ENCODE measurements at regions of chr16 and their contacts with region 1.

Region 1: GRCh38 chr16:54171626-54172525 is 114.7 kb downstream of the IRX3 start:
- DNase-seq: peak; percentile 16 to 46
- H3K4me3 ChIP-seq: no peak overlapping the region
- H3K27ac ChIP-seq: no peak overlapping the region
- H3K4me1 ChIP-seq: no peaks in the 10 kb centered on the region
- H3K27me3 ChIP-seq: no peaks in the 10 kb centered on the region
- CTCF ChIP-seq: no peak

Region 2: DNA sequence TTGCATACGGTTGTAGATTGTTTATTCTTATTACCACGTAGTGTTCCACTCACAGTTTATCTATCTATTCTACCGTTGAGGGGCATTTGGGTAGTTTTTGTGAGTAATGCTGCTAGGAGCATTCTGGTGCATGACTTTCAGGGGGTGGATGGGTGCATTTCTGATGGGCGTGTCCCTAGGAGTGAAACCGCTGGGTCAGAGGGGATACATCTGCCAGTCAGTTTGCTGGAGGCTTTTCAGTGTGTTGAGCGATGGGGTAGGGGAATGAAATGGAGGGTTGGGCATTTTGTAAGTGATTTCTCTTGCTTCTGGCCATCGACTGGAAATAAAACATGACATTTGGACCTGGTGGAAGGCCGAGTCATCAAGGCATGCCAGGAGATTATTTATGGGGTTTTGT is 131.7 kb after region 1 on chr16:
- CTCF ChIA-PET with region 1: no interaction called
- POLR2A ChIA-PET with region 1: interaction called, 11 read pairs
- intact Hi-C with region 1: no loop called
- DNase-seq: no peak
- H3K4me3 ChIP-seq: no peak overlapping the region
- H3K27ac ChIP-seq: no peak overlapping the region
- H3K4me1 ChIP-seq: no peaks in the 10 kb centered on the region
- H3K27me3 ChIP-seq: no peaks in the 10 kb centered on the region
- CTCF ChIP-seq: no peak